PC-9 (cell line): ENCODE measurements at regions of chr16 and their contacts with region 1.

Region 1: DNA sequence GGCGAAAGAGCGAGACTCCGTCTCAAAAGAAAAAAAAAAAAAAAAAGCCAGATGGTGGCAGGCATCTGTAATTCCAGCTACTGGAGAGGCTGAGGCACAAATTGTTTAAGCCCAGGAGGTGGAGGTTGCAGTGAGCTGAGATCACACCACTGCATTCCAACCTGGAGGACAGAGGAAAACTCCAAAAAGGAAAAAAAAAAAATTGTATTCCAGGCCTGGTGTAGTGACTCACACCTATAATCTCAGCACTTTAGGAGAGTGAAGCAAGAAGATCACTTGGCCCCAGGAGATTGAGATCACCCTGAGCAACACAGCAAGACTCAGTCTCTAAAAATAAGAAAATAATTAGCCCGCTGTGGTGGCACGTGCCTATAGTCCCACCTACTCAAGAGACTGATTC is 20.1 kb downstream of the HBQ1 start:
- DNase-seq: no peak
- H3K4me3 ChIP-seq: no peak overlapping the region
- H3K27ac ChIP-seq: 0 out of 2 replicates have a peak overlapping the region, but pooled peaks have one; percentile 23
- H3K4me1 ChIP-seq: no peaks in the 10 kb centered on the region
- H3K27me3 ChIP-seq: no peaks in the 10 kb centered on the region
- CTCF ChIP-seq: no peak

Region 2: GRCh38 chr16:164827-165538 is 35.4 kb before region 1 on chr16:
- CTCF ChIA-PET with region 1: no interaction called
- POLR2A ChIA-PET with region 1: no interaction called
- intact Hi-C with region 1: no loop called
- DNase-seq: no peak
- H3K4me3 ChIP-seq: no peak overlapping the region
- H3K27ac ChIP-seq: no peak overlapping the region
- H3K4me1 ChIP-seq: no peaks in the 10 kb centered on the region
- H3K27me3 ChIP-seq: peaks cover 14% of the 10 kb centered on the region
- CTCF ChIP-seq: no peak

Region 3: GRCh38 chr16:2056681-2057407 is 1856.5 kb after region 1 on chr16:
- CTCF ChIA-PET with region 1: interaction called, 14 read pairs
- POLR2A ChIA-PET with region 1: no interaction called
- intact Hi-C with region 1: no loop called
- DNase-seq: no peak
- H3K4me3 ChIP-seq: no peak overlapping the region
- H3K27ac ChIP-seq: no peak overlapping the region
- H3K4me1 ChIP-seq: no peaks in the 10 kb centered on the region
- H3K27me3 ChIP-seq: no peaks in the 10 kb centered on the region
- CTCF ChIP-seq: peak; percentile 30; the same call in 1 of the 2 replicates